GM12878 (cell line): ENCODE measurements at regions of chr16 and their contacts with region 1.

Region 1: DNA sequence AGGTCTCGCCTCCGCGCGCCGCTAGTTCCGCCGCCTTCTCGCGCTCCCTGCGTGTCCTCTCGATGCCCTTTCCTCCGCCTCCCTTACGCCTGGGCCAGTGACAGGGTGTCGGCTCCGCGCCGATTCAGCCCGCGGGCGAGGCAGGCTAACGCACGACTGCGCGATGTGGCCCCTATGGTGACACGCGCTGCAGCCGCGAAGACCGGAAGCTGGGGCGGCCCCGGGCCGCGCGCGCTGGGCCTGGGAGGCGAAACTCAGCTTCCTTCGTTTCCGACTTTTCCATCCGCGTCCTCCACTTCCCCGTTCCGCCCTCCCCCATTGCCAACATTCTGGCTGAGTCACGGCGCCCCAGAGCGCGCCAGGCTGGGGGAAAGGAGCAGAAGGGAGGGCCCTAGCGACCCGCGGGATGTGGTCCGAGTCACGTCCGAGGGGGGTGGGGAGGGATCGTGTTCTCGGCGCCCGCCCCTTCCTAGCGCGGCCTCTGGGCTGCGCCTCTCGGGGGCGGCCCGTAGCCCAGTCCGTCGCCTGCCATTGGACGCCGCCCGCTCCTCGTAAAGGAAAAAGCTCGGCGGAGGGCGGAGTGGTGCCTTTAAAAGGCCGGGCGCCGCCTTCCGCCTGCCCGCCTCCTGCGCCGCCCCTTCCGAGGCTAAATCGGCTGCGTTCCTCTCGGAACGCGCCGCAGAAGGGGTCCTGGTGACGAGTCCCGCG is at the start of gene ALDOA:
- DNase-seq: peak; percentile 86
- ATAC-seq: peak; percentile 89
- H3K4me3 ChIP-seq: peak within 1 kb of the TSS; percentile 94
- H3K27ac ChIP-seq: peak within 1 kb of the TSS; percentile 94
- H3K4me1 ChIP-seq: peaks cover 30% of the 10 kb centered on the region
- H3K27me3 ChIP-seq: no peaks in the 10 kb centered on the region
- CTCF ChIP-seq: no peak
- EP300 ChIP-seq: peak in 1 of 2 experiments; percentile 51; a peak in 2 of 4 replicates
- POLR2A ChIP-seq: peak; percentile 86
- RAD21 ChIP-seq: no peak
- polyA plus RNA-seq, gene ALDOA: 218 to 335 TPM

Region 2: GRCh38 chr16:30005341-30006094 is 59.8 kb before region 1 on chr16:
- CTCF ChIA-PET with region 1: no interaction called
- POLR2A ChIA-PET with region 1: no interaction called
- RAD21 ChIA-PET with region 1: no interaction called
- SMC1A ChIA-PET with region 1: no interaction called
- in situ Hi-C with region 1: no loop called
- intact Hi-C with region 1: no loop called
- DNase-seq: no peak
- ATAC-seq: peak; percentile 85
- H3K4me3 ChIP-seq: no peak overlapping the region
- H3K27ac ChIP-seq: no peak overlapping the region
- H3K4me1 ChIP-seq: no peaks in the 10 kb centered on the region
- H3K27me3 ChIP-seq: peaks cover 0 to 1% of the 10 kb centered on the region in 2 experiments; a peak in 1 of 4 replicates
- CTCF ChIP-seq: peak; percentile 67 to 80 (median 79)
- EP300 ChIP-seq: no peak
- POLR2A ChIP-seq: no peak; the same call in 1 of the 2 replicates
- RAD21 ChIP-seq: peak; percentile 57

Region 3: DNA sequence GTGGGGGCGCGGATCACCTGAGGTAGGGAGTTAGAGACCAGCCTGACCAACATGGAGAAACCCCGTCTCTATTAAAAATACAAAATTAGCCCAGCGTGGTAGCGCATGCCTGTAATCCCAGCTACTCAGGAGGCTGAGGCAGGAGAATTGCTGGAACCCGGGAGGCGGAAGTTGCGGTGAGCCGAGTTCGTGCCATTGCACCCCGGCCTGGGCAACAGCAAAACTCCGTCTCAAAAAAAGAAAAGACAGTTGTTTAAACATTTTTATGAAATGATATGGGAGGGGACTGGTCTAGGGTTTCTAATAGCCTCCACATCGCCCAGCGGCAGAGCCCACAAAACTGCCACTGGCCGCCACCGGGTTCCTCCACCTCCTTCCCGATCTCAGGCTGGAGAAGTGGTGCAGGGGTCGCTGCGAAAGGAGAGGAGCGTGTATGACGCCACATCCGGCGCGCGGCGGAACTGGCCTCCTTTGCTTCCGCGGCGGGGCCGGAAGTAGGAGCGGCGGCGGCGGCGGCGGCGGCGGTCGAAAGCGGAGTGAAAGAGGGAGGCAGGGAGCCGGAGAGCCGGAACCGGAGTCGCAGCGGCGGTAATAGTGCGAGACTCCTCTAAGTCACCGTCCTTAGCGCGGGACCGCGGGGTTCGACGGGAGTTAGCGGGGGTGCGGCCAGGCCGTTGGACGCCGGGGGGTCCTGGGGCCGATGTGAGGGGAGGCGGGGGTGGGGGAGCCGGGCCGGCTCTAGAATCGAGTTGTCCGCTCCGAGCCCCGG is 10.4 kb after region 1 on chr16 and contains the start of gene PPP4C:
- CTCF ChIA-PET with region 1: interaction called, 9 read pairs
- POLR2A ChIA-PET with region 1: interaction called, 16 read pairs
- RAD21 ChIA-PET with region 1: interaction called, 3 read pairs
- SMC1A ChIA-PET with region 1: interaction called, 3 read pairs
- in situ Hi-C with region 1: no loop called
- intact Hi-C with region 1: no loop called
- DNase-seq: no peak
- ATAC-seq: peak; percentile 90
- H3K4me3 ChIP-seq: peak within 1 kb of the TSS; percentile 92
- H3K27ac ChIP-seq: peak within 1 kb of the TSS; percentile 84
- H3K4me1 ChIP-seq: peaks cover 10% of the 10 kb centered on the region
- H3K27me3 ChIP-seq: no peaks in the 10 kb centered on the region
- CTCF ChIP-seq: no peak; a peak in 1 of 6 replicates
- EP300 ChIP-seq: no peak
- POLR2A ChIP-seq: peak; percentile 88
- RAD21 ChIP-seq: no peak
- polyA plus RNA-seq, gene PPP4C: 2.7 to 18.8 TPM